CD4-positive, alpha-beta memory T cell (primary cell): ENCODE measurements at regions of chr11 and their contacts with region 1.

Region 1: DNA sequence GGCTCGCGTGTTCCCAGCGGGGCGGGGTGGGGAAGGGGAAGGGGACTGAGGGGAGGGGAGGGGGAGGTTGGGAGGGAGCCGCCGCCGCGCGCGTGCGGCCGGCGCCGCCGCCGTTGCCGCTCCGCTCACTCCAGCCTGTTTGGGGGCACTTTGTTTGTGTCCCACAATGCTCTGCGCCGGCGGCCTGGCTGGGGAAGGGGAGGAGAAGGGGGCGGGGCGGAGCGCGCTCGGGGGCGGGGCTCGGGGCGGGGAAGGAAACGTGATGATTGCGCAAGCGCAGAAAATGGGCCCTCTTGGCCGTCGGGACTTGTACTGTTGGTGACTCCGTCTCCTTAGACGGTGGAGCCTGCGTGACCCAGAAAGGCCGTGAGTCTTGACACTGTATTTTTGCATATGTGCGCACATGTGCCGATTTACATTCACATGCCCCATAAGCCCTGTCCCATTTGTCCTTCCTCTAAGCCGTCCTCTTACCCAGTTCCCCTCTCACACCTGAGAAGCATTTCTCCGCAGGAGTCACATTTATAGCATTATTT is at the start of gene ZBTB44:
- DNase-seq: peak; percentile 87 to 93 (median 88)
- H3K4me3 ChIP-seq: peak within 1 kb of the TSS; percentile 54 to 67
- H3K4me3 Mint-ChIP-seq: peak within 1 kb of the TSS; percentile 89 to 100 (median 98)
- H3K27ac ChIP-seq: peak within 1 kb of the TSS; percentile 72
- H3K27ac Mint-ChIP-seq: peak within 1 kb of the TSS; percentile 95 to 99 (median 98)
- H3K4me1 ChIP-seq: peaks cover 42% of the 10 kb centered on the region
- H3K4me1 Mint-ChIP-seq: peaks cover 24 to 59% (median 32%) of the 10 kb centered on the region in 4 donors
- H3K27me3 ChIP-seq: no peaks in the 10 kb centered on the region
- H3K27me3 Mint-ChIP-seq: no peaks in the 10 kb centered on the region
- total RNA-seq, gene ZBTB44: 73.0 to 76.2 TPM

Region 2: GRCh38 chr11:129279326-129280026 is 1035.3 kb before region 1 on chr11:
- CTCF ChIA-PET with region 1: no interaction called
- POLR2A ChIA-PET with region 1: no interaction called
- intact Hi-C with region 1: loop called (anchors 10 kb)
- DNase-seq: peak; percentile 70 to 79 (median 74)
- H3K4me3 ChIP-seq: peak overlapping the region in 1 of 2 donors; percentile 31
- H3K4me3 Mint-ChIP-seq: peak overlapping the region; percentile 75 to 86 (median 84)
- H3K27ac ChIP-seq: no peak overlapping the region
- H3K27ac Mint-ChIP-seq: peak overlapping the region in 2 of 7 donors; percentile 54 to 72
- H3K4me1 ChIP-seq: peaks cover 19% of the 10 kb centered on the region
- H3K4me1 Mint-ChIP-seq: peaks cover 12 to 27% (median 18%) of the 10 kb centered on the region in 4 donors
- H3K27me3 ChIP-seq: no peaks in the 10 kb centered on the region
- H3K27me3 Mint-ChIP-seq: peaks cover 23% of the 10 kb centered on the region in 2 donors

Region 3: GRCh38 chr11:130069684-130070108 is 245.1 kb before region 1 on chr11 and contains the start of gene APLP2:
- CTCF ChIA-PET with region 1: no interaction called
- POLR2A ChIA-PET with region 1: no interaction called
- intact Hi-C with region 1: loop called (anchors 1 kb)
- DNase-seq: peak; percentile 96 to 99 (median 96)
- H3K4me3 ChIP-seq: peak within 1 kb of the TSS; percentile 65 to 89
- H3K4me3 Mint-ChIP-seq: peak within 1 kb of the TSS; percentile 93 to 99 (median 98)
- H3K27ac ChIP-seq: peak within 1 kb of the TSS; percentile 74
- H3K27ac Mint-ChIP-seq: peak within 1 kb of the TSS; percentile 94 to 98 (median 97)
- H3K4me1 ChIP-seq: peaks cover 17% of the 10 kb centered on the region
- H3K4me1 Mint-ChIP-seq: peaks cover 16 to 33% (median 20%) of the 10 kb centered on the region in 4 donors
- H3K27me3 ChIP-seq: no peaks in the 10 kb centered on the region
- H3K27me3 Mint-ChIP-seq: no peaks in the 10 kb centered on the region
- total RNA-seq, gene APLP2: 58.7 to 65.3 TPM

Region 4: DNA sequence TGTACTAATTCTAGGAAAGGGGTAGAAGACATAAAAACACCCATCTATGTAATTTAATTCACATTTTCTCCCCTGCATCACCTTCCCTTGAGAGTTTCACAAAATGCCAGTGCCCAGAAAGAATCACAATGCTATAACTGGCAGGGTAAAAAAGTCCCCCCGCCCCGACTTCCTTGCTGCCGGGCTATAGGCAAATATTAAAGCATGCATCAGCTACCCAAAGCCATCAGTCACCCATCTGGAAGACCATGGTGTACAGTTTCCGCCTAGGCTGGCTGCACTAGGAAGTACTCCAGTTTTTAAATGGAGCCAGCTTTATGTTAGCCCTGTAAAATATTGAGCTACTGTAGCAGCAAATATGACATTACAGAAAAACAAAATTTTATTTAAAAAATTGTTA is 87.4 kb before region 1 on chr11:
- CTCF ChIA-PET with region 1: no interaction called
- POLR2A ChIA-PET with region 1: no interaction called
- intact Hi-C with region 1: loop called (anchors 5 kb)
- DNase-seq: no peak
- H3K4me3 ChIP-seq: no peak overlapping the region
- H3K4me3 Mint-ChIP-seq: no peak overlapping the region
- H3K27ac ChIP-seq: no peak overlapping the region
- H3K27ac Mint-ChIP-seq: no peak overlapping the region
- H3K4me1 ChIP-seq: no peaks in the 10 kb centered on the region
- H3K4me1 Mint-ChIP-seq: peaks cover 3 to 11% (median 5%) of the 10 kb centered on the region in 4 donors
- H3K27me3 ChIP-seq: no peaks in the 10 kb centered on the region
- H3K27me3 Mint-ChIP-seq: no peaks in the 10 kb centered on the region

Region 5: GRCh38 chr11:130434521-130435223 is 119.9 kb after region 1 on chr11:
- CTCF ChIA-PET with region 1: no interaction called
- POLR2A ChIA-PET with region 1: no interaction called
- intact Hi-C with region 1: loop called (anchors 2 kb)
- DNase-seq: peak; percentile 60 to 68 (median 63)
- H3K4me3 ChIP-seq: peak overlapping the region; percentile 67 to 85
- H3K4me3 Mint-ChIP-seq: no peak overlapping the region
- H3K27ac ChIP-seq: no peak overlapping the region
- H3K27ac Mint-ChIP-seq: no peak overlapping the region
- H3K4me1 ChIP-seq: peaks cover 10% of the 10 kb centered on the region
- H3K4me1 Mint-ChIP-seq: peaks cover 7 to 17% (median 15%) of the 10 kb centered on the region in 4 donors
- H3K27me3 ChIP-seq: peaks cover 5% of the 10 kb centered on the region
- H3K27me3 Mint-ChIP-seq: peaks cover 9% of the 10 kb centered on the region in 2 donors